ENCODE measurements at regions of chr1 and their contacts with region 1.

Region 1: GRCh38 chr1:162128693-162129356 is 59.3 kb downstream of the NOS1AP start:
- DNase-seq: no peak
- ATAC-seq: no peak
- H3K4me3 ChIP-seq: no peak overlapping the region
- H3K27ac ChIP-seq: no peak overlapping the region
- H3K4me1 ChIP-seq: peaks cover 0 to 43% (median 16%) of the 10 kb centered on the region in 4 donors
- H3K27me3 ChIP-seq: no peaks in the 10 kb centered on the region
- CTCF ChIP-seq: no peak
- POLR2A ChIP-seq: no peak

Region 2: GRCh38 chr1:162069328-162070093 is 59.3 kb before region 1 on chr1 and contains the start of gene NOS1AP:
- intact Hi-C with region 1: loop called in 1 of 2 experiments (anchors 10 kb)
- DNase-seq: peak; percentile 92 to 95 (median 93)
- ATAC-seq: peak; percentile 94 to 98 (median 96)
- H3K4me3 ChIP-seq: peak within 1 kb of the TSS; percentile 73 to 83 (median 74)
- H3K27ac ChIP-seq: peak within 1 kb of the TSS; percentile 69 to 85 (median 81)
- H3K4me1 ChIP-seq: peaks cover 0 to 31% (median 0%) of the 10 kb centered on the region in 4 donors
- H3K27me3 ChIP-seq: no peaks in the 10 kb centered on the region
- CTCF ChIP-seq: peak in 1 of 4 donors; percentile 8
- POLR2A ChIP-seq: peak; percentile 91
- total RNA-seq, gene NOS1AP: 4.7 to 24.8 (median 11.6) TPM

Measured in right lobe of liver (tissue), 6 donors.